ENCODE measurements at regions of chr6 and their contacts with region 1.

Region 1: GRCh38 chr6:27893059-27893835 is 18.9 kb downstream of the OR2B2 start:
- DNase-seq: peak; percentile 86 to 95
- ATAC-seq: peak; percentile 70 to 85 (median 72)
- H3K4me3 ChIP-seq: peak overlapping the region; percentile 58
- H3K4me3 Mint-ChIP-seq: no peak overlapping the region
- H3K27ac ChIP-seq: peak overlapping the region; percentile 76
- H3K27ac Mint-ChIP-seq: no peak overlapping the region
- H3K4me1 ChIP-seq: peaks cover 48% of the 10 kb centered on the region
- H3K4me1 Mint-ChIP-seq: peaks cover 34 to 36% of the 10 kb centered on the region in 2 donors
- H3K27me3 ChIP-seq: no peaks in the 10 kb centered on the region
- H3K27me3 Mint-ChIP-seq: no peaks in the 10 kb centered on the region
- CTCF ChIP-seq: no peak

Region 2: DNA sequence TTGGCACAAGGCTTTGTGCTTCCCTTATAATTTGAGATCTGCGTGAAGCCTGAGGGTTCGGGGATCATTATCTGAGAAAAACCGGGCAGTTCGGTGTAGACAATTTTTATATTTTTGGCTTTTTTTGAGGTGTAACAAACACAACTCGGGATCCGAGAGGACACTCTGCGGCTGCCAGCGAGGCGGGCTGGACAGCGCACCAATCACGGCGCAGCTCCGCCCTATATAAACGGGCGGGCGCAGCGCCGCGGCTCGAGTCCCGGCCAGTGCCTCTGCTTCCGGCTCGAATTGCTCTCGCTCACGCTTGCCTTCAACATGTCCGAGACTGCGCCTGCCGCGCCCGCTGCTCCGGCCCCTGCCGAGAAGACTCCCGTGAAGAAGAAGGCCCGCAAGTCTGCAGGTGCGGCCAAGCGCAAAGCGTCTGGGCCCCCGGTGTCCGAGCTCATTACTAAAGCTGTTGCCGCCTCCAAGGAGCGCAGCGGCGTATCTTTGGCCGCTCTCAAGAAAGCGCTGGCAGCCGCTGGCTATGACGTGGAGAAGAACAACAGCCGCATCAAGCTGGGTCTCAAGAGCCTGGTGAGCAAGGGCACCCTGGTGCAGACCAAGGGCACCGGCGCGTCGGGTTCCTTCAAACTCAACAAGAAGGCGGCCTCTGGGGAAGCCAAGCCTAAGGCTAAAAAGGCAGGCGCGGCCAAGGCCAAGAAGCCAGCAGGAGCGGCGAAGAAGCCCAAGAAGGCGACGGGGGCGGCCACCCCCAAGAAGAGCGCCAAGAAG is 1737.0 kb before region 1 on chr6:
- intact Hi-C with region 1: loop called (anchors 2 kb)
- DNase-seq: peak; percentile 92 to 93
- ATAC-seq: peak; percentile 48 to 72 (median 58)
- H3K4me3 ChIP-seq: peak overlapping the region; percentile 65
- H3K4me3 Mint-ChIP-seq: peak overlapping the region; percentile 99
- H3K27ac ChIP-seq: peak overlapping the region; percentile 87
- H3K27ac Mint-ChIP-seq: peak overlapping the region; percentile 92 to 97
- H3K4me1 ChIP-seq: peaks cover 29% of the 10 kb centered on the region
- H3K4me1 Mint-ChIP-seq: peaks cover 56% of the 10 kb centered on the region in 2 donors
- H3K27me3 ChIP-seq: no peaks in the 10 kb centered on the region
- H3K27me3 Mint-ChIP-seq: no peaks in the 10 kb centered on the region
- CTCF ChIP-seq: no peak

Region 3: GRCh38 chr6:27132532-27133280 is 760.5 kb before region 1 on chr6:
- intact Hi-C with region 1: loop called (anchors 2 kb)
- DNase-seq: peak; percentile 87 to 98
- ATAC-seq: peak; percentile 82 to 95 (median 87)
- H3K4me3 ChIP-seq: peak overlapping the region; percentile 65
- H3K4me3 Mint-ChIP-seq: no peak overlapping the region
- H3K27ac ChIP-seq: peak overlapping the region; percentile 85
- H3K27ac Mint-ChIP-seq: no peak overlapping the region
- H3K4me1 ChIP-seq: peaks cover 29% of the 10 kb centered on the region
- H3K4me1 Mint-ChIP-seq: peaks cover 5 to 6% of the 10 kb centered on the region in 2 donors
- H3K27me3 ChIP-seq: no peaks in the 10 kb centered on the region
- H3K27me3 Mint-ChIP-seq: no peaks in the 10 kb centered on the region
- CTCF ChIP-seq: no peak

Region 4: GRCh38 chr6:27479319-27480182 is 413.7 kb before region 1 on chr6:
- intact Hi-C with region 1: loop called (anchors 1 kb)
- DNase-seq: peak; percentile 92 to 93
- ATAC-seq: peak; percentile 77 to 87 (median 82)
- H3K4me3 ChIP-seq: peak overlapping the region; percentile 92
- H3K4me3 Mint-ChIP-seq: no peak overlapping the region
- H3K27ac ChIP-seq: peak overlapping the region; percentile 99
- H3K27ac Mint-ChIP-seq: no peak overlapping the region
- H3K4me1 ChIP-seq: peaks cover 13% of the 10 kb centered on the region
- H3K4me1 Mint-ChIP-seq: peaks cover 0 to 4% of the 10 kb centered on the region in 2 donors
- H3K27me3 ChIP-seq: no peaks in the 10 kb centered on the region
- H3K27me3 Mint-ChIP-seq: no peaks in the 10 kb centered on the region
- CTCF ChIP-seq: no peak

Region 5: GRCh38 chr6:27772261-27773001 is 120.8 kb before region 1 on chr6:
- intact Hi-C with region 1: loop called (anchors 1 kb)
- DNase-seq: peak; percentile 84 to 91
- ATAC-seq: peak; percentile 93 to 99 (median 99)
- H3K4me3 ChIP-seq: no peak overlapping the region
- H3K4me3 Mint-ChIP-seq: no peak overlapping the region
- H3K27ac ChIP-seq: no peak overlapping the region
- H3K27ac Mint-ChIP-seq: no peak overlapping the region
- H3K4me1 ChIP-seq: peaks cover 12% of the 10 kb centered on the region
- H3K4me1 Mint-ChIP-seq: peaks cover 6 to 8% of the 10 kb centered on the region in 2 donors
- H3K27me3 ChIP-seq: no peaks in the 10 kb centered on the region
- H3K27me3 Mint-ChIP-seq: peaks cover 15 to 21% of the 10 kb centered on the region in 2 donors
- CTCF ChIP-seq: peak; percentile 93

Region 6: DNA sequence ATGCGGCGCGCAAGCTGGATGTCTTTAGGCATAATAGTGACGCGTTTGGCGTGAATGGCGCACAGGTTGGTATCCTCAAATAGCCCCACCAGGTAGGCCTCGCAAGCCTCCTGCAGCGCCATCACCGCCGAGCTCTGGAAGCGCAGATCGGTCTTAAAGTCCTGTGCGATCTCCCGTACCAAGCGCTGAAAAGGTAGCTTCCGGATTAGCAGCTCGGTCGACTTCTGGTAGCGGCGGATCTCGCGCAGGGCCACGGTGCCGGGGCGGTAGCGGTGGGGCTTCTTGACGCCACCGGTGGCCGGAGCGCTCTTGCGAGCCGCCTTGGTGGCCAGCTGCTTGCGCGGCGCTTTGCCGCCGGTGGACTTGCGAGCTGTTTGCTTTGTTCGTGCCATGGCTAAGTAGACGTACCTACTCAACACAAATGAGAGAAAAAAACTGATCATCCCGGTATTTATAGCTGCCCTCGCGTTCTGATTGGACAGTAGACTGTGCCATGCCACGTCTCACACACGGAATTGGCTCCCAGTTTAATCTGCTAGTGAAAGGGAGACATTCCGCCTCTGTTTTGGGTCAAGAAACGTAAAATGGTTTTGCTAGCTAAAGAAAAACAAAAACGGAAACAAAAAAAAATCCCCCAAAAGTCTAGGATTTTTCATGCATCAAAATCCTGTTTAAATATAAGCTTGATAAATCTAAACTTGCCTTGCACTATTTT is 21.2 kb before region 1 on chr6:
- intact Hi-C with region 1: loop called (anchors 1 kb)
- DNase-seq: peak; percentile 76 to 97
- ATAC-seq: peak; percentile 73 to 82 (median 78)
- H3K4me3 ChIP-seq: peak overlapping the region; percentile 68
- H3K4me3 Mint-ChIP-seq: peak overlapping the region; percentile 99
- H3K27ac ChIP-seq: peak overlapping the region; percentile 95
- H3K27ac Mint-ChIP-seq: peak overlapping the region; percentile 100
- H3K4me1 ChIP-seq: peaks cover 32% of the 10 kb centered on the region
- H3K4me1 Mint-ChIP-seq: peaks cover 44 to 50% of the 10 kb centered on the region in 2 donors
- H3K27me3 ChIP-seq: no peaks in the 10 kb centered on the region
- H3K27me3 Mint-ChIP-seq: no peaks in the 10 kb centered on the region
- CTCF ChIP-seq: no peak